PC-3 (cell line): ENCODE measurements at regions of chr20 and their contacts with region 1.

Region 1: GRCh38 chr20:62740286-62741141 is 31.9 kb downstream of the NTSR1 start:
- DNase-seq: peak; percentile 98
- ATAC-seq: peak; percentile 74
- H3K4me3 ChIP-seq: peak overlapping the region; percentile 61; the same call in 1 of the 2 replicates
- H3K27ac ChIP-seq: peak overlapping the region; percentile 98
- H3K4me1 ChIP-seq: peaks cover 30% of the 10 kb centered on the region
- H3K27me3 ChIP-seq: no peaks in the 10 kb centered on the region
- CTCF ChIP-seq: peak; percentile 30; the same call in 1 of the 2 replicates

Region 2: GRCh38 chr20:62623488-62624324 is 116.8 kb before region 1 on chr20:
- CTCF ChIA-PET with region 1: no interaction called
- POLR2A ChIA-PET with region 1: no interaction called
- intact Hi-C with region 1: loop called (anchors 1 kb)
- DNase-seq: peak; percentile 98
- ATAC-seq: peak; percentile 63
- H3K4me3 ChIP-seq: peak overlapping the region; percentile 45; the same call in 1 of the 2 replicates
- H3K27ac ChIP-seq: peak overlapping the region; percentile 98
- H3K4me1 ChIP-seq: peaks cover 60% of the 10 kb centered on the region
- H3K27me3 ChIP-seq: no peaks in the 10 kb centered on the region
- CTCF ChIP-seq: no peak

Region 3: GRCh38 chr20:62704301-62704948 is 36.1 kb before region 1 on chr20:
- CTCF ChIA-PET with region 1: interaction called, 3 read pairs
- POLR2A ChIA-PET with region 1: no interaction called
- intact Hi-C with region 1: loop called (anchors 1 kb)
- DNase-seq: peak; percentile 99
- ATAC-seq: peak; percentile 55
- H3K4me3 ChIP-seq: 0 out of 2 replicates have a peak overlapping the region, but pooled peaks have one; percentile 3
- H3K27ac ChIP-seq: peak overlapping the region; percentile 97
- H3K4me1 ChIP-seq: peaks cover 40% of the 10 kb centered on the region
- H3K27me3 ChIP-seq: no peaks in the 10 kb centered on the region
- CTCF ChIP-seq: 0 out of 2 replicates have a peak, but pooled peaks have one; percentile 23

Region 4: GRCh38 chr20:62711531-62712101 is 28.9 kb before region 1 on chr20:
- CTCF ChIA-PET with region 1: no interaction called
- POLR2A ChIA-PET with region 1: no interaction called
- intact Hi-C with region 1: loop called (anchors 2 kb)
- DNase-seq: no peak
- ATAC-seq: no peak
- H3K4me3 ChIP-seq: peak overlapping the region; percentile 64; the same call in 1 of the 2 replicates
- H3K27ac ChIP-seq: no peak overlapping the region
- H3K4me1 ChIP-seq: peaks cover 18% of the 10 kb centered on the region; the same call in 1 of the 2 replicates
- H3K27me3 ChIP-seq: 0 out of 2 replicates have a peak, but pooled peaks cover 3% of the 10 kb centered on the region
- CTCF ChIP-seq: no peak

Region 5: GRCh38 chr20:62999580-62999979 is 259.1 kb after region 1 on chr20:
- CTCF ChIA-PET with region 1: no interaction called
- POLR2A ChIA-PET with region 1: no interaction called
- intact Hi-C with region 1: no loop called
- DNase-seq: no peak
- ATAC-seq: no peak
- H3K4me3 ChIP-seq: no peak overlapping the region
- H3K27ac ChIP-seq: no peak overlapping the region
- H3K4me1 ChIP-seq: peaks cover 12% of the 10 kb centered on the region
- H3K27me3 ChIP-seq: 0 out of 2 replicates have a peak, but pooled peaks cover 7% of the 10 kb centered on the region
- CTCF ChIP-seq: no peak